Activated CD8-positive, alpha-beta memory T cell treated with anti-CD3 and anti-CD28 coated beads, Interleukin-2, amount 10 ng/mL, durations not matched to agents 7 days and 5 days (primary cell): ENCODE measurements at regions of chr14 and their contacts with region 1.

Region 1: DNA sequence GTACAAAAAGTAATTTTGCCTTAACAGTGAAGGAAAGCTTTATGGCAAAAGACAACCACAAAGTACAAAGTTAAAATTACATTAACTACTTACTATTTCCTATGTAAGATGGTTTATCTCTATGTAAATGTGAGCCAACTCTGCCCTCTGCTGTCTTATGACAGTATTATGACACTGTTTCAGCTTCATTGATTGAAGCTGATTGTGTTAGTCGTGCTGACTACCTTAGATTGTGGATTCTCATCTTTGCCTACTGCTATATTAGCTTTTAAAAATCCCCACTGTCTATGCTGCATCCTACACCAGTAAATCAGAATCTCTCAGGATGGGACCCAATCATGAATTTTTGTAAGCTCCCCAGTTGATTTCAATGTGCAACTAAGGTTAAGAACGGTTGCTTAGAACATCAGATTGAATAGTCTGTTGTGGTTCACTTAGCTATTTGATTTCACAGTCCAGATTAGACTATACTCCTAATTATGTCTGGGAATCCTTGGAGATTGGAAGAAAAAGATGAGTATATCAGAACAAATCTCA is 12.2 kb upstream of the SPTB start:
- DNase-seq: peak; percentile 44
- ATAC-seq: peak; percentile 80
- H3K4me3 Mint-ChIP-seq: no peak overlapping the region
- H3K27ac Mint-ChIP-seq: no peak overlapping the region
- H3K4me1 Mint-ChIP-seq: no peaks in the 10 kb centered on the region
- H3K27me3 Mint-ChIP-seq: peaks cover 27% of the 10 kb centered on the region

Region 2: DNA sequence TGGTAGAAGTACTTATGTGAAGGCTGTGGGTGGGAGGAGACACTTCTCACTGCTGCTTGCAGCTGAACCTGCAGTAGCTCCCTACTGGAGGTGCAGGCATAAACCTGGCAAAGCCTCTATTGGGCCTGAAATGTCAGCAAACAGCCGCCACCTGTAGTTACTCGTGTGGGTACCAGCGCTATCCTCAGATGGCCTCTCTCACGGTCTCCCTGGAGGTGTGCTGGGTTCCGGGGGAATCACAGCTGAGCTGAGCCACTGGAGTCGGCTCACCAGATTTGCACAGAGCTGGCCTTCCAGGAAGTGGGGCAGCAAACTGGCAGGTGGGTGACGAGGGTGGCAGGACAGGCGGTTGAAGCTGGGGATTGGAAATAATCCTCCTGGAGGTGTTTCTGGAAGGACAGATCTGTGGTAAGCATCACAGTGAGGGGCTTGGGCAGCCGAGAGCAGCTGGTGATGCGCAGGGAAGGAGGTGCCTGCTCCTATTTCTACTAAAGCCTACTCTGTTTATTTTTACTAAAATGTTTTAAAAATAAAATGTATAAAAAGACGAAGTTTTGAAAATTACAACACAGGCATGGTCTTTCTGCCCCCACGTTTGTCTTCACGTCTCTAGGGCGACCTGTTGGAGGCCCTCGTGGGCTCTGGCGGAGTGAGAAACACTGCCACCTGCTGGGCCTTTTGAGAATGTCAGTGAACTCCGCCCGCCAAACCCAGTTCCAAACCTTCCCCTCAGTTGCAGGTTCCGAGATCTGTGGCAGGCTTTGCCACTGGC is 255.5 kb before region 1 on chr14:
- CTCF ChIA-PET with region 1: interaction called, 10 read pairs
- DNase-seq: peak; percentile 77
- ATAC-seq: peak; percentile 94
- H3K4me3 Mint-ChIP-seq: no peak overlapping the region
- H3K27ac Mint-ChIP-seq: no peak overlapping the region
- H3K4me1 Mint-ChIP-seq: peaks cover 8% of the 10 kb centered on the region
- H3K27me3 Mint-ChIP-seq: peaks cover 16% of the 10 kb centered on the region

Region 3: DNA sequence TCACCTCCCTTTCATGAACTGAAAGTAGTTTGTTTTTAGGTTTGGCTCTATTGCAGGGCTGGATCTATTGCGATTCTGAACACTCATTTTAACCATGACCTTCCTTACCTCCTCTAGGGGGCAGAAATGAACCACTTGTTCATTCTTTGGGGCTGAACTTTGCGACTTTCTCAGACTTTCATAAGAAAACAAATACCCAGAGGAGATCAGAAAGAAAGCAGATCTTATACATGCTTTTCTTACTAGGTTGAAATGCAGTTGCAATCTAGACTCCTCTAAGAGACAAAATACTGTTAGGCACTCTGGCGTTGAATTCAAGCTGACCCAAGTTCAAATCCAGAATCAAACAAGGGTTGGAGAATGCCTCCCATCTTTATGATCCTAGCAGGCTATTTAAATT is 220.3 kb before region 1 on chr14:
- CTCF ChIA-PET with region 1: interaction called, 18 read pairs
- DNase-seq: no peak
- ATAC-seq: peak; percentile 55
- H3K4me3 Mint-ChIP-seq: no peak overlapping the region
- H3K27ac Mint-ChIP-seq: no peak overlapping the region
- H3K4me1 Mint-ChIP-seq: peaks cover 42% of the 10 kb centered on the region
- H3K27me3 Mint-ChIP-seq: peaks cover 12% of the 10 kb centered on the region

Region 4: GRCh38 chr14:64726585-64726890 is 165.4 kb before region 1 on chr14:
- CTCF ChIA-PET with region 1: no interaction called
- DNase-seq: no peak
- ATAC-seq: no peak
- H3K4me3 Mint-ChIP-seq: no peak overlapping the region
- H3K27ac Mint-ChIP-seq: peak overlapping the region; percentile 39
- H3K4me1 Mint-ChIP-seq: peaks cover 73% of the 10 kb centered on the region
- H3K27me3 Mint-ChIP-seq: no peaks in the 10 kb centered on the region

Region 5: GRCh38 chr14:64764641-64765520 is 127.0 kb before region 1 on chr14:
- CTCF ChIA-PET with region 1: interaction called, 25 read pairs
- DNase-seq: peak; percentile 79
- ATAC-seq: peak; percentile 74
- H3K4me3 Mint-ChIP-seq: no peak overlapping the region
- H3K27ac Mint-ChIP-seq: no peak overlapping the region
- H3K4me1 Mint-ChIP-seq: peaks cover 35% of the 10 kb centered on the region
- H3K27me3 Mint-ChIP-seq: peaks cover 18% of the 10 kb centered on the region

Region 6: GRCh38 chr14:64823305-64823861 is 68.5 kb before region 1 on chr14:
- CTCF ChIA-PET with region 1: interaction called, 72 read pairs
- DNase-seq: peak; percentile 74
- ATAC-seq: peak; percentile 85
- H3K4me3 Mint-ChIP-seq: no peak overlapping the region
- H3K27ac Mint-ChIP-seq: no peak overlapping the region
- H3K4me1 Mint-ChIP-seq: peaks cover 4% of the 10 kb centered on the region
- H3K27me3 Mint-ChIP-seq: peaks cover 41% of the 10 kb centered on the region

Region 7: DNA sequence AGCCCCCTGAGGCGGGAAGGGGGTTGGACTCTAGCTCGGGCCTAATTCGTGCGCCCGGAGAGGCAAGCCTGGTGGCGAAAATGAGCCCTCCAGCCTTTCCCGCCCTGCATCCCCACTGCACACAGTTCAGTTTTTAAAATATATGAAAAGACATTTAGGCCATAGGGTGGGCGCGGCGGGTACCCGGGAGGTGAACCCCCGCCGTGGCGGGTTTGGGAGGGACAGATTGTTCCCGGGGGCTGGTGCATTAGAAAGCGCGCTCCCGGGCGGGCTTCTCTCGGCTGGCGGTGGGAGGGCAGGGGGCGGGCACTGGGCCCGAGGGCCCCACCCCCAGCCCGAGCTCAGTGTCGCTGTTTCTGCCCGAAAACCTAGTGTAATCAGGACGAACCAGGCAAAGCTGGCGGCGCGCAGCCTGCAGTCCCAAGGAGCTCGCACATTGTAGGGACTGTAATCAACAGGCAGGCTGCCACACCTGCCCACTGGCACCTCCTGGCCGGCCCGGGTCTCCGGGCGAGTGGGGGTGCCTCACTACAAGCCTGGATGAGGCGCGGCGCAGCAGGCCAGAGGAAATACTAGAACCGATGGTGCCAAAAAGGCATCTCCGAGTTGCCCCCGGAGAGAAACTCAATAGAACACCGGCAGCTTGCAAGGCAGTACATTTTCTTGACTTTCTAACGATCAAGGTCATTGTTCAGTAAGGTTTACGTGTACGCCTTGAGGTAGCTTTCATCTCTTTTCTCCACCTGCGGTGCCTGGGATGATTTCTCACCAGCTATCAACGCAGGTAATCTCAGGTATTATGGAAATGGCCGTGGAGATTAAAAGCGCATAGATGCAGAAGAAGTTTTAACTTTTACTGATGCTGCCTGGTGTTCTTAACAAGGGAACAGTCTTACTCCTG is 11.4 kb before region 1 on chr14:
- CTCF ChIA-PET with region 1: interaction called, 42 read pairs
- DNase-seq: peak; percentile 67
- ATAC-seq: peak; percentile 94
- H3K4me3 Mint-ChIP-seq: peak overlapping the region; percentile 73
- H3K27ac Mint-ChIP-seq: no peak overlapping the region
- H3K4me1 Mint-ChIP-seq: peaks cover 13% of the 10 kb centered on the region
- H3K27me3 Mint-ChIP-seq: peaks cover 77% of the 10 kb centered on the region

Region 8: GRCh38 chr14:64914237-64914971 is 22.5 kb after region 1 on chr14 and contains the start of gene CHURC1:
- CTCF ChIA-PET with region 1: interaction called, 19 read pairs
- DNase-seq: peak; percentile 98
- ATAC-seq: peak; percentile 98
- H3K4me3 Mint-ChIP-seq: peak within 1 kb of the TSS; percentile 78
- H3K27ac Mint-ChIP-seq: peak within 1 kb of the TSS; percentile 91
- H3K4me1 Mint-ChIP-seq: peaks cover 44% of the 10 kb centered on the region
- H3K27me3 Mint-ChIP-seq: peaks cover 18% of the 10 kb centered on the region
- total RNA-seq, gene CHURC1: 49.3 to 57.9 TPM